T-cell (primary cell): ENCODE measurements at regions of chr6 and their contacts with region 1.

Region 1: GRCh38 chr6:129590408-129591022 is 119.5 kb downstream of the ARHGAP18 start:
- DNase-seq: no peak
- ATAC-seq: no peak
- H3K4me3 ChIP-seq: no peak overlapping the region
- H3K4me3 Mint-ChIP-seq: no peak overlapping the region
- H3K27ac ChIP-seq: no peak overlapping the region
- H3K27ac Mint-ChIP-seq: no peak overlapping the region
- H3K4me1 ChIP-seq: no peaks in the 10 kb centered on the region
- H3K4me1 Mint-ChIP-seq: no peaks in the 10 kb centered on the region
- H3K27me3 ChIP-seq: no peaks in the 10 kb centered on the region
- H3K27me3 Mint-ChIP-seq: no peaks in the 10 kb centered on the region

Region 2: GRCh38 chr6:129475477-129476247 is 114.9 kb before region 1 on chr6:
- CTCF ChIA-PET with region 1: no interaction called
- POLR2A ChIA-PET with region 1: no interaction called
- DNase-seq: no peak
- ATAC-seq: no peak
- H3K4me3 ChIP-seq: no peak overlapping the region
- H3K4me3 Mint-ChIP-seq: no peak overlapping the region
- H3K27ac ChIP-seq: no peak overlapping the region
- H3K27ac Mint-ChIP-seq: no peak overlapping the region
- H3K4me1 ChIP-seq: no peaks in the 10 kb centered on the region
- H3K4me1 Mint-ChIP-seq: no peaks in the 10 kb centered on the region
- H3K27me3 ChIP-seq: no peaks in the 10 kb centered on the region
- H3K27me3 Mint-ChIP-seq: no peaks in the 10 kb centered on the region

Region 3: DNA sequence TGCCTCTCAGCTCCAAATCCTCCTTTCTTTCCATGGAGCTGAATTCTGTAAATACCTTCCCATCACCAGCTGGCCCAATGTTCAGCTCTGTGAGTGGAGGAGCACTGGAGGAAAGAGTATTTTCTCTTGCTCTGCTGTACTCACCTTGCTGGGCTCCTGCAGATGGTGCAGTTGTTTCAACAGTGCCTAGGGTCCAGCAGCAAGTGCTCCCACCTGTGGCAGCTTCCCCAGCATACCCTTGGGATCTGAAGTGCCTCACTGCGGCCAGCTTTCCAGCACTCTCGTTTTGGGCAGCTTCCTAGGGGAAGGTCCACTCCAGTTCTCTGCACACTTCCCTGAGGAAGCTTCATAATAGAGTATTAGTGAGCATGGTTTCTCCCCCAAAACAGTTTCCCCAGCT is 51.5 kb before region 1 on chr6:
- CTCF ChIA-PET with region 1: no interaction called
- POLR2A ChIA-PET with region 1: no interaction called
- DNase-seq: no peak
- ATAC-seq: no peak
- H3K4me3 ChIP-seq: no peak overlapping the region
- H3K4me3 Mint-ChIP-seq: no peak overlapping the region
- H3K27ac ChIP-seq: no peak overlapping the region
- H3K27ac Mint-ChIP-seq: no peak overlapping the region
- H3K4me1 ChIP-seq: no peaks in the 10 kb centered on the region
- H3K4me1 Mint-ChIP-seq: no peaks in the 10 kb centered on the region
- H3K27me3 ChIP-seq: no peaks in the 10 kb centered on the region
- H3K27me3 Mint-ChIP-seq: no peaks in the 10 kb centered on the region

Region 4: DNA sequence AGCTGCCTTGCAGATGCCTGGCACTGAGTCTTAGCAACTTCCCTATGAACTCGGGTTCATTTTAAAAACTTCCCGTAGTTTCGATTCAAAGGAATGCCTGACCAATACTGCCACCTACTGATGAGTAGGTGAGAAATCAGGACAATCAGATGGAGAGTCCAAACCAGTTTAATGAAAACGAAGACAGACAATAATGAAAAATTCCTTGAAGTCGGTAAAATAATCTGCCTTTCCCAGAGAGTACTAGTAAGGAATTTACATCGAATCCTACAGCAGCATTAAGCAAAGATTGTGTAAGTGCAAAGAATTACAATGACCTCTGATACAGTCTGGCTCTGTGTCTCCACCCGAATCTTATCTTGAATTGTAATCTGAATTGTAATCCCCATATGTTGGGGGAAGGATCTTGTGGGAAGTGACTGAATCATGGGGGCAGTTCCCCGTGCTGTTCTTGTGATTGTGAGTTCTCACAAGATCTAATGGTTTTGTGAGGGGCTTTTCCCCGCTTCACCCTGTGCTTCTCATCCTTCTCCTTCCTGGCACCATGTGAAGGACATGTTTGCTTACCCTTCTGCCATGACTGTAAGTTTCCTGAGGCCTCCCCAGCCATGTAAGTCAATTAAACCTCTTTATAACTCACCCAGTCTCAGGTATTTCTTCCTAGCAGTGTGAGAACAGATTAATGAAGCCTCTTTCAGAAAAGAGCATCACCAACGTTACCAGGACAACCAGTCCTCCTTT is 15.0 kb before region 1 on chr6:
- CTCF ChIA-PET with region 1: no interaction called
- POLR2A ChIA-PET with region 1: no interaction called
- DNase-seq: peak in 1 of 35 experiments; percentile 51
- ATAC-seq: no peak
- H3K4me3 ChIP-seq: peak overlapping the region in 1 of 2 donors; percentile 10
- H3K4me3 Mint-ChIP-seq: peak overlapping the region; percentile 37 to 57 (median 50)
- H3K27ac ChIP-seq: no peak overlapping the region
- H3K27ac Mint-ChIP-seq: no peak overlapping the region
- H3K4me1 ChIP-seq: no peaks in the 10 kb centered on the region
- H3K4me1 Mint-ChIP-seq: peaks cover 5 to 10% (median 7%) of the 10 kb centered on the region in 3 donors
- H3K27me3 ChIP-seq: no peaks in the 10 kb centered on the region
- H3K27me3 Mint-ChIP-seq: no peaks in the 10 kb centered on the region

Region 5: DNA sequence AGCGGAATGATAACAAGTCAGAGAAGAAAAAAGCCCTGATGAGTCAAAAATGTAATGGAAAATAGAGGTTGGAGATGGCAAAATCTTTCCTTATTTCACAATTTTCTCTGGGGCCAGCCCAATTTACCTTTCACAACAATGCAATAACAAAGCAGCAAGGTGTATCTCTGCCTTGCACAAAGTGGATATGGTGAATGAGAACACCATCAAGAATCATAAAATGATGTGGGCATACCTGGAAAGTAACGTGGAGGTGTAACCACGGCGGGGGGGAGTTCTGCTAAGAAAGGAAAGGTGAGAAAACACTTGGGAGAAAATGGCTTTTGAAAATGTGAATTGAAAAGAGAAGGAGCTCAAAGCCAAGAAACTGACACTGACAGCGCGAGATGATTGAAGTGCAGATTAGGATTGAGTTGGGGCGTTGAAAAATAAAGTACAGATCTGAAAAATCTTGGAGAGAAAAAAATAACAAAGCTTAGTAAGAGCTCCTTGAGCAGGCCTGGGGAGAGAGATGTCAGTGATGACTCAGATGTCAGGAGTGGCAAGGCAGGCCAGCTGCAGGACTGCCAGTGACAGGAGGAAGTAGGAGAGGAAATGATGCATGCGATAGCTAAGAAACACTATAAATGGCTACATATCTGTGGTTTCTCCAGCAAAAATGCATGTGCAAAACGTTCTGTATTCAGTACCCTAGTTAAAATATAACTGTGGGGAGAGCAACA is 93.2 kb after region 1 on chr6:
- CTCF ChIA-PET with region 1: no interaction called
- POLR2A ChIA-PET with region 1: interaction called in 1 of 2 experiments, 10 read pairs
- DNase-seq: peak; percentile 25 to 79 (median 49)
- ATAC-seq: peak; percentile 91 to 92 (median 92)
- H3K4me3 ChIP-seq: no peak overlapping the region
- H3K4me3 Mint-ChIP-seq: peak overlapping the region in 2 of 3 donors; percentile 7 to 32
- H3K27ac ChIP-seq: peak overlapping the region; percentile 56
- H3K27ac Mint-ChIP-seq: peak overlapping the region; percentile 74 to 81
- H3K4me1 ChIP-seq: peaks cover 33 to 39% of the 10 kb centered on the region in 2 experiments
- H3K4me1 Mint-ChIP-seq: peaks cover 45 to 59% (median 50%) of the 10 kb centered on the region in 3 donors
- H3K27me3 ChIP-seq: no peaks in the 10 kb centered on the region
- H3K27me3 Mint-ChIP-seq: no peaks in the 10 kb centered on the region

Region 6: GRCh38 chr6:130500693-130501092 is 910.2 kb after region 1 on chr6:
- CTCF ChIA-PET with region 1: no interaction called
- POLR2A ChIA-PET with region 1: no interaction called
- DNase-seq: no peak
- ATAC-seq: no peak
- H3K4me3 ChIP-seq: no peak overlapping the region
- H3K4me3 Mint-ChIP-seq: no peak overlapping the region
- H3K27ac ChIP-seq: no peak overlapping the region
- H3K27ac Mint-ChIP-seq: peak overlapping the region in 1 of 2 donors; percentile 15
- H3K4me1 ChIP-seq: peaks cover 0 to 10% of the 10 kb centered on the region in 2 experiments
- H3K4me1 Mint-ChIP-seq: peaks cover 13 to 23% (median 20%) of the 10 kb centered on the region in 3 donors
- H3K27me3 ChIP-seq: no peaks in the 10 kb centered on the region
- H3K27me3 Mint-ChIP-seq: no peaks in the 10 kb centered on the region